Activated CD4-positive, alpha-beta memory T cell treated with anti-CD3 and anti-CD28 coated beads for 36 hours (primary cell): ENCODE measurements at regions of chr1 and their contacts with region 1.

Region 1: GRCh38 chr1:206612129-206612876 is at the start of gene EIF2D:
- DNase-seq: peak; percentile 96
- H3K4me3 Mint-ChIP-seq: peak within 1 kb of the TSS; percentile 96
- H3K27ac Mint-ChIP-seq: peak within 1 kb of the TSS; percentile 90
- H3K4me1 Mint-ChIP-seq: peaks cover 32% of the 10 kb centered on the region
- H3K27me3 Mint-ChIP-seq: no peaks in the 10 kb centered on the region
- total RNA-seq, gene EIF2D: 84.6 to 87.5 TPM

Region 2: GRCh38 chr1:206513312-206514111 is 98.8 kb before region 1 on chr1:
- CTCF ChIA-PET with region 1: no interaction called
- POLR2A ChIA-PET with region 1: no interaction called
- intact Hi-C with region 1: no loop called
- DNase-seq: no peak
- H3K4me3 Mint-ChIP-seq: no peak overlapping the region
- H3K27ac Mint-ChIP-seq: no peak overlapping the region
- H3K4me1 Mint-ChIP-seq: peaks cover 6% of the 10 kb centered on the region
- H3K27me3 Mint-ChIP-seq: peaks cover 19% of the 10 kb centered on the region

Region 3: GRCh38 chr1:206544562-206545257 is 67.6 kb before region 1 on chr1:
- CTCF ChIA-PET with region 1: interaction called, 37 read pairs
- POLR2A ChIA-PET with region 1: interaction called, 5 read pairs
- intact Hi-C with region 1: no loop called
- DNase-seq: peak; percentile 88
- H3K4me3 Mint-ChIP-seq: no peak overlapping the region
- H3K27ac Mint-ChIP-seq: peak overlapping the region; percentile 42
- H3K4me1 Mint-ChIP-seq: peaks cover 17% of the 10 kb centered on the region
- H3K27me3 Mint-ChIP-seq: no peaks in the 10 kb centered on the region

Region 4: GRCh38 chr1:206556750-206557635 is 55.3 kb before region 1 on chr1:
- CTCF ChIA-PET with region 1: interaction called, 12 read pairs
- POLR2A ChIA-PET with region 1: interaction called, 4 read pairs
- intact Hi-C with region 1: loop called (anchors 1 kb)
- DNase-seq: peak; percentile 94
- H3K4me3 Mint-ChIP-seq: peak overlapping the region; percentile 97
- H3K27ac Mint-ChIP-seq: peak overlapping the region; percentile 99
- H3K4me1 Mint-ChIP-seq: peaks cover 66% of the 10 kb centered on the region
- H3K27me3 Mint-ChIP-seq: no peaks in the 10 kb centered on the region

Region 5: GRCh38 chr1:206658264-206658980 is 46.1 kb after region 1 on chr1:
- CTCF ChIA-PET with region 1: interaction called, 165 read pairs
- POLR2A ChIA-PET with region 1: interaction called, 7 read pairs
- intact Hi-C with region 1: no loop called
- DNase-seq: peak; percentile 74
- H3K4me3 Mint-ChIP-seq: no peak overlapping the region
- H3K27ac Mint-ChIP-seq: no peak overlapping the region
- H3K4me1 Mint-ChIP-seq: peaks cover 20% of the 10 kb centered on the region
- H3K27me3 Mint-ChIP-seq: peaks cover 18% of the 10 kb centered on the region

Region 6: GRCh38 chr1:206925106-206925736 is 312.9 kb after region 1 on chr1:
- CTCF ChIA-PET with region 1: interaction called, 3 read pairs
- POLR2A ChIA-PET with region 1: no interaction called
- intact Hi-C with region 1: loop called (anchors 2 kb)
- DNase-seq: peak; percentile 82
- H3K4me3 Mint-ChIP-seq: no peak overlapping the region
- H3K27ac Mint-ChIP-seq: no peak overlapping the region
- H3K4me1 Mint-ChIP-seq: peaks cover 33% of the 10 kb centered on the region
- H3K27me3 Mint-ChIP-seq: no peaks in the 10 kb centered on the region

Region 7: GRCh38 chr1:207279652-207280051 is 667.3 kb after region 1 on chr1:
- CTCF ChIA-PET with region 1: no interaction called
- POLR2A ChIA-PET with region 1: no interaction called
- intact Hi-C with region 1: no loop called
- DNase-seq: no peak
- H3K4me3 Mint-ChIP-seq: no peak overlapping the region
- H3K27ac Mint-ChIP-seq: no peak overlapping the region
- H3K4me1 Mint-ChIP-seq: peaks cover 33% of the 10 kb centered on the region
- H3K27me3 Mint-ChIP-seq: no peaks in the 10 kb centered on the region